IMR-90 (cell line): ENCODE measurements at regions of chr2 and their contacts with region 1.

Region 1: DNA sequence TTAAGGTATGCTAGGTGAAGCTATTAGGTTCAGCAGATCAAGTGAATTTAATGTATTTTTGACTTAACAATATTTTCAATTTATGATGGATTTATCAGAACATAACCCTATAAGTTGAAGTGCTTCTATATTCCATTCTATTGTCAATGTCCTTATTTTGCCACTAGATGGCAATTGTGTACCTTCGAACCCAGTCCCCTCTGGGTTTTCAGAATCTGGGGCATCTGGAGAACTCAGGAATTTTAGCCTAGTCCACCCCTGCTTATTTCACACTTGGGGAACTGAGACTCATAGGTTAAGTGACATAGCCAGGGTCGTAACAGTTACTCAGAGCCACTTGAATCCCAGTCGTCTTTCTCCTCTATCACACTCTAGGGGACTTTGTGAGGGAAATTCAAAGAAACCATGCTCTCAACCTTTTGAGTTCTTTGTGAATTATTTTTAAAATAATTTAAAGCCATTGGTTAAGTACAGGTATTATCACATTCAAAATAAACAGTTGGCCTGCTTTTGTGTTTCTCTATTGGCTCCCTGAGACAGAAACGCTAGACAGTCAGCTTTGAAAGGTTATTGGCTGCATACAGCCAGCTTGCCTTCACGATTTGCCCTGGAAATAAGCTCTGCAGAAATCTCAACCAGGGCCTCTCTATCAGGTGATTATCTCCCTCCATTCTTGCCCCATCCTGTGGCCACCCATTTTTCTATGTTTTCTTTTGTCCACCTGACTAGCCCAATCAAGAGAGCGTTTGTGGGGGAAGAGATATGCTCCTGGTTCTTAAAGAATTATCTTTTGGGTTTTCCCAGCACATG is 145.0 kb downstream of the TTC27 start:
- DNase-seq: peak; percentile 76
- ATAC-seq: peak; percentile 95
- H3K4me3 ChIP-seq: no peak overlapping the region
- H3K27ac ChIP-seq: no peak overlapping the region
- H3K4me1 ChIP-seq: peaks cover 7% of the 10 kb centered on the region; the same call in 1 of the 2 replicates
- H3K27me3 ChIP-seq: no peaks in the 10 kb centered on the region
- CTCF ChIP-seq: peak; percentile 85
- POLR2A ChIP-seq: no peak
- RAD21 ChIP-seq: peak; percentile 95

Region 2: GRCh38 chr2:32805104-32805766 is 32.4 kb after region 1 on chr2:
- CTCF ChIA-PET with region 1: no interaction called
- POLR2A ChIA-PET with region 1: no interaction called
- dilution Hi-C with region 1: no loop called
- in situ Hi-C with region 1: no loop called
- intact Hi-C with region 1: no loop called
- DNase-seq: peak; percentile 78
- ATAC-seq: peak; percentile 57
- H3K4me3 ChIP-seq: no peak overlapping the region
- H3K27ac ChIP-seq: no peak overlapping the region
- H3K4me1 ChIP-seq: peaks cover 10% of the 10 kb centered on the region
- H3K27me3 ChIP-seq: no peaks in the 10 kb centered on the region
- CTCF ChIP-seq: no peak
- POLR2A ChIP-seq: no peak
- RAD21 ChIP-seq: no peak

Region 3: GRCh38 chr2:32864334-32865111 is 91.7 kb after region 1 on chr2:
- CTCF ChIA-PET with region 1: no interaction called
- POLR2A ChIA-PET with region 1: no interaction called
- dilution Hi-C with region 1: no loop called
- in situ Hi-C with region 1: no loop called
- intact Hi-C with region 1: loop called (anchors 5 kb)
- DNase-seq: peak; percentile 93
- ATAC-seq: peak; percentile 90
- H3K4me3 ChIP-seq: no peak overlapping the region; the same call in 1 of the 2 replicates
- H3K27ac ChIP-seq: peak overlapping the region; percentile 94
- H3K4me1 ChIP-seq: peaks cover 16% of the 10 kb centered on the region
- H3K27me3 ChIP-seq: no peaks in the 10 kb centered on the region
- CTCF ChIP-seq: no peak
- POLR2A ChIP-seq: no peak
- RAD21 ChIP-seq: no peak

Region 4: GRCh38 chr2:33033606-33034081 is 260.8 kb after region 1 on chr2:
- CTCF ChIA-PET with region 1: interaction called, 5 read pairs
- POLR2A ChIA-PET with region 1: no interaction called
- dilution Hi-C with region 1: no loop called
- in situ Hi-C with region 1: loop called (anchors 5 kb)
- intact Hi-C with region 1: loop called (anchors 2 kb)
- DNase-seq: peak; percentile 66
- ATAC-seq: peak; percentile 80
- H3K4me3 ChIP-seq: no peak overlapping the region
- H3K27ac ChIP-seq: peak overlapping the region; percentile 42; the same call in 1 of the 2 replicates
- H3K4me1 ChIP-seq: peaks cover 4% of the 10 kb centered on the region
- H3K27me3 ChIP-seq: no peaks in the 10 kb centered on the region
- CTCF ChIP-seq: peak; percentile 75
- POLR2A ChIP-seq: no peak
- RAD21 ChIP-seq: peak; percentile 68